Calu3 (cell line): ENCODE measurements at regions of chr20 and their contacts with region 1.

Region 1: GRCh38 chr20:32289661-32290431 is 12.4 kb downstream of the KIF3B start:
- DNase-seq: peak; percentile 71
- H3K4me3 Mint-ChIP-seq: peak overlapping the region; percentile 51
- H3K27ac Mint-ChIP-seq: peak overlapping the region; percentile 71
- H3K4me1 Mint-ChIP-seq: peaks cover 54% of the 10 kb centered on the region
- H3K27me3 Mint-ChIP-seq: no peaks in the 10 kb centered on the region
- CTCF ChIP-seq: no peak

Region 2: DNA sequence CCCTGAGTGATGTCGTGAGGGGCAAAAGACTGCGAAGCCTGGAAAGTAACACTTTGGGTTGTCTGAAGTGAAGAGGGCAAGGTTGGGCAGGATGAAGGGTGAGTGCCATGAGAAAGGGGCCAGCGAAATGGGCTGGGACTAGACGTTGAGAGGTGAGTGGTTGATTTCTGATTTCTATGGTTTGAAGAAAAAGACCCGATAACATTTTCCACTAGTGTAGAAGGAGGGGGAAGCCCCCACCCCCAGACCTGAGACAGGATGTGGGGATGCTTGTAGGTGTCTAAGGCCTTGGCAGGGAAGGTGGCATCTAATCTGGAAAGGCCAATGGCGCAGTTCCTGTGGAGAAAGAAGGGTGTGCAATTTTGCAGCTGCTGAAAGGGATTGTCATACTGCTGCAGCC is 37.7 kb before region 1 on chr20:
- CTCF ChIA-PET with region 1: no interaction called
- intact Hi-C with region 1: loop called (anchors 1 kb)
- DNase-seq: no peak
- H3K4me3 Mint-ChIP-seq: no peak overlapping the region
- H3K27ac Mint-ChIP-seq: no peak overlapping the region
- H3K4me1 Mint-ChIP-seq: peaks cover 11% of the 10 kb centered on the region
- H3K27me3 Mint-ChIP-seq: no peaks in the 10 kb centered on the region
- CTCF ChIP-seq: no peak

Region 3: GRCh38 chr20:32302507-32302872 is 12.6 kb after region 1 on chr20:
- CTCF ChIA-PET with region 1: interaction called, 14 read pairs
- intact Hi-C with region 1: no loop called
- DNase-seq: no peak
- H3K4me3 Mint-ChIP-seq: no peak overlapping the region
- H3K27ac Mint-ChIP-seq: no peak overlapping the region
- H3K4me1 Mint-ChIP-seq: peaks cover 24% of the 10 kb centered on the region
- H3K27me3 Mint-ChIP-seq: no peaks in the 10 kb centered on the region
- CTCF ChIP-seq: no peak

Region 4: GRCh38 chr20:32357869-32358631 is 68.2 kb after region 1 on chr20 and contains the start of gene ASXL1:
- CTCF ChIA-PET with region 1: interaction called, 3 read pairs
- intact Hi-C with region 1: loop called (anchors 2 kb)
- DNase-seq: peak; percentile 100
- H3K4me3 Mint-ChIP-seq: peak within 1 kb of the TSS; percentile 88
- H3K27ac Mint-ChIP-seq: peak within 1 kb of the TSS; percentile 93
- H3K4me1 Mint-ChIP-seq: peaks cover 49% of the 10 kb centered on the region
- H3K27me3 Mint-ChIP-seq: no peaks in the 10 kb centered on the region
- CTCF ChIP-seq: no peak
- total RNA-seq, gene ASXL1: 120 and 123 TPM in 2 replicates